HepG2 (cell line): ENCODE measurements at regions of chr17 and their contacts with region 1.

Region 1: DNA sequence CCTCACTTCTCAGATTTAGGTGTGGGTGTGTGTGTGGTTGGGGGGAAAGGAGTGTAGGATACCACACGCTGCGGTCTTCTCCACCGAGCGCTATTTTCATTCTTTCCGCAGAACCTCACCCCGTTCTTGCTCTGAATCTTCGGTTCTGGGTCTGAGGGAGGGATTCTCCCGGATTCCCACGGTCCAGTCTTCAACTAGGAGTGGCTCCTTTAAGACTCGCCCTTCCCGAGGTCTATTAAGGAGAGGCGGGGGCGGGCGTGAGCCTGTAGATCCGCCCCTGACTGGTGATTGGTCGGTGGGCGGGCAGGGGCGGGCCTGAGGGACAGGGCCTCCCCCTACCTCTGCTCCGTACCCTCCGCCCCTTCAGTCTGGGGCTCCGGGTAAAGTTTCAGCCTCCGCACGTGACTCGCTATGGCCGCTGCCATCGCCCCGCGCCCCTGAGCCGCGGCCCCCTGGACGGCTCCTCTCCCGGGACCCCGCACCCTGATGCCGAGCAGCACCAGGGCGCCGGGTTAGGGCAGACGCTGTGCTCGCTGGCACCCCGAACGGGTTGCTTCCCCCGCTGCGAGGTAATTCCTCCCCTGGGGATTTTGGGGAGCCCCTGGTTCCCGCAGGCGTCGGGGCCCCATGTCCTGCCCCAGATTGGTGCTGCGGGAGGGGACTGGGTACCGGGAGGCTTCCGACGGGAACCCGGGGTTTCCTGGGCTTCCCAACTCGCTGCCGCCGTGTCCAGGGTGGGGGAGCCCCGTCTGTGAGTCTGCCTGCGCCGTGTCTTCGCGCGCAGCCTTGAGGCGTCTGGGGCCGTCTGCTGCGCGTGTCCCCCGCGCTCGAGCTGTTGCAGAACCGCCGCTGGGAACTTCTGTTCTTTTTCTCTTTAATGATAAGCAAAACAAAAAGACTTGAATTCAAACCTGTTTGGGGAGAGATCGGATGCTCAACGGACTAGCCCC is 9.2 kb downstream of the RARA start:
- DNase-seq: peak; percentile 91
- ATAC-seq: peak; percentile 90
- H3K4me3 ChIP-seq: peak overlapping the region; percentile 86 to 95 (median 86)
- H3K27ac ChIP-seq: peak overlapping the region; percentile 29
- H3K4me1 ChIP-seq: peaks cover 89% of the 10 kb centered on the region
- H3K27me3 ChIP-seq: no peaks in the 10 kb centered on the region; a peak in 1 of 5 replicates
- CTCF ChIP-seq: no peak; the same call in 1 of the 2 replicates
- EP300 ChIP-seq: no peak
- POLR2A ChIP-seq: peak; percentile 66 to 88
- RAD21 ChIP-seq: no peak

Region 2: DNA sequence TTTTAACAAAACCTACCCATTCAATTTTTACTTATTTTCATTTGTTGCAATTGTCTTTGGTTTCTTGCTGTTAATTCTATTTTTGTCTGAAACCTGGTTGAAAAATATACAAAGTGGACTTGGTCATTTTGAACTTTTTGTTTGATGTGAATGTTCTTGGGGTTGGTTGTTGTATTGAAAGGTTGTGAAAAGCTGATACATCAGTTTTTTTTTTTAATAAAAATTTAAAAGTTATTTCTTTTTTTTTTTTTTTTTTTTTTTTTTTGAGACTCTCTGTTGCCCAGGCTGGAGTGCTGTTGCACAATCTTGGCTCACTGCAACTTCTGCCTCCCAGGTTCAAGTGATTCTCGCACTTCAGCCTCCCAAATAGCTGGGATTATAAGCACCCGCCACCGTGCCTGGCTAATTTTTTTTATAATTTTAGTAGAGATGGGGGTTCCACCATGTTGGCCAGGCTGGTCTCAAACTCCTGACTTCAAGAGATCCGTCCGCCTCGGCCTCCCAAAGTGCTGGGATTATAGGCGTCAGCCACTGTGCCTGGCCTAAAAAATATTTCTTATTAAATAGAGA is 70.1 kb before region 1 on chr17:
- CTCF ChIA-PET with region 1: no interaction called
- POLR2A ChIA-PET with region 1: no interaction called
- in situ Hi-C with region 1: no loop called
- intact Hi-C with region 1: no loop called
- DNase-seq: no peak
- ATAC-seq: no peak
- H3K4me3 ChIP-seq: no peak overlapping the region
- H3K27ac ChIP-seq: no peak overlapping the region
- H3K4me1 ChIP-seq: no peaks in the 10 kb centered on the region
- H3K27me3 ChIP-seq: no peaks in the 10 kb centered on the region
- CTCF ChIP-seq: no peak
- EP300 ChIP-seq: no peak
- POLR2A ChIP-seq: no peak
- RAD21 ChIP-seq: no peak

Region 3: DNA sequence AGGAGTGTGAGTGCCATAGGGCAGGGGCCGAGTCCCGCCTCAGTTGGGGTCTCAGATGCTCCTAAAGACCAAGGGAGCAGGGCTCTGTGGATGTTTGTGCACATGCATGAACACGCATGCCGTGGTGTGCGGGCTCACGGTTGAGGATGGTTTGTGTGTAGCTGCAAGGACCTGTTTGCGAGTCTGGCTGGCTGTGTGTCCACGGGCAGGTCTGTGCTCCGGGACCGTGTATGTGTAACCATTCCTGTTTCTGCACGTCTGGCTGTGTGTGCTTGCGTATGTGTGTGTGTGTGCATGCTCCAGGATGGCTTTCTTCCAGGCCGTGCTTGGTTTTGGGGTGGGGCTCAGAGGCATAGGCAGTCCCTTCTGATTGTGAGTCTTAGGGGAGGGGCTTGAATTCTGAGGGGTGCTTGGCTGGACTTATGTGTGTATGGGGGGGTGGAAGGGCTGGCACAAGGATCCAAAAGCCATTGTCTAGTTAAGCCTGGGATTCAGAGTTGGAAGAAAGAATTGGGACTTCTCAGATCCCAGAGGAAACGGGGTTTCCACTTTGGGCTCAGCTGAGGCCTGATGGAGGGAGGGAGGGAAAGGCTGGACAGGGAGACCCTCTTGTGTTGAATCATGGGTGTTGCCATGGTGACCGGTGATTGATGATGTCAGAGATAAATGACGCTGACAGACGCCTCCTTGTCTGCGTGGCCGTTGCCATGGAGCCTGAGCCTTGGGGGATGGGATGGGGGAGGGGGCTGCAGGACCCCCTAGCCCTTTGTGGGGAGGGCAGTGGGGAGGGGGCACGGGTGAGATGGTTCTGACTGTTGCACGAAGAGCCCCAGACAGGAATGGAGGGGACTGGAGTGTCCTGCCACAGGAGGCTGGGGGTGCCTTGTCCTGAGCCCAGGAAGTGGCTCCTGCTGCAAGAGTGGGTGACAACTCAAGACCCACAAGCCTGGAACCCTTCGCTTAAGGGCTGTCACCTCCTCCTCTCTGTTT is 32.1 kb after region 1 on chr17:
- CTCF ChIA-PET with region 1: interaction called, 3 read pairs
- POLR2A ChIA-PET with region 1: interaction called, 45 read pairs
- in situ Hi-C with region 1: loop called (anchors 5 kb)
- intact Hi-C with region 1: loop called (anchors 2 kb)
- DNase-seq: no peak
- ATAC-seq: no peak
- H3K4me3 ChIP-seq: no peak overlapping the region
- H3K27ac ChIP-seq: no peak overlapping the region
- H3K4me1 ChIP-seq: peaks cover 73% of the 10 kb centered on the region
- H3K27me3 ChIP-seq: no peaks in the 10 kb centered on the region
- CTCF ChIP-seq: no peak
- EP300 ChIP-seq: no peak
- POLR2A ChIP-seq: no peak
- RAD21 ChIP-seq: no peak

Region 4: DNA sequence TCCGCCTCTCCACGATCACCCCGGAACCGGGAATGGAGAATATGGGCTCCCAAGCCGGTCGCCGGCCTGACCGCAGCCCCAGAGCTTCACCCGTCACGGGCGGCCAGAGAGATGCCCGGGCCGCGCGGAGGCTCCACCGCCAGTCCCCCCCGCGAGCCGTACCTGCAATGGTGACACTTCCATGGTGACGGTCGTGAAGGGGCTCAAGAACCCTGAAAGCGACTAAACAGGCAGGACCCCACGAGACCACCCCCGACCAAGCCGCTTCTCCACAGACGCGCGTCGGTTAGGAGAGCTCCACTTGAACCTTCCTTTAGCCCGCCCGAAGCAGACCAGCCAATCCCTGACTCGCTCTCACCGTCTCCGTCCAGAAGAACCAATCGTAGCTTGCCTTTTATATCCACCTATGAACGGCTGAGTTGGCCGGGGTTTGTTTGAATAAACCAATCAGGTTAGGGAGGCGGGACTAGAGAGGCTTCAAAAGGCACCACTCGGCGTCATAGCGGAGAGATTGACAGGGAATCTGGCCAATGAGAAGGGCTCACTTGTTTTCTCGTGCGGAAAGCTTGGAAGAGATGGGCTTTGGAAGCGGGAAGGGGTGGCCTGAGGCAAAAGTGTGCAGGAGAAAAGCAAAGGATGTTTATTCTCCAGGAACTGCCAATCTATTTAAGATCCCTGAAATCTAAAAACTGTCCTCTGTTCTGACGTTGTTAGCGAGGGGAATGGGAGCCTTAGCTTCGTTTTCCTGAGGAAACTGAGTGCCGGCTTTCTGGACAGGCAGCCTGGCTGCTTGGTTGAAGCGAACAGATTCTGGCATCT is 99.7 kb after region 1 on chr17 and contains the start of gene TOP2A:
- CTCF ChIA-PET with region 1: no interaction called
- POLR2A ChIA-PET with region 1: interaction called, 4 read pairs
- in situ Hi-C with region 1: loop called (anchors 5 kb)
- intact Hi-C with region 1: loop called (anchors 2 kb)
- DNase-seq: peak; percentile 100
- ATAC-seq: peak; percentile 90
- H3K4me3 ChIP-seq: peak within 1 kb of the TSS; percentile 89 to 98 (median 96)
- H3K27ac ChIP-seq: peak within 1 kb of the TSS; percentile 82
- H3K4me1 ChIP-seq: peaks cover 79% of the 10 kb centered on the region
- H3K27me3 ChIP-seq: no peaks in the 10 kb centered on the region
- CTCF ChIP-seq: no peak
- EP300 ChIP-seq: 0 out of 4 replicates have a peak, but pooled peaks of 1 of the 2 experiments have one; percentile 12
- POLR2A ChIP-seq: peak; percentile 92 to 93
- RAD21 ChIP-seq: no peak; the same call in 1 of the 2 replicates
- total RNA-seq, gene TOP2A: 327 and 614 TPM in 2 replicates